Panc1 (cell line): ENCODE measurements at regions of chr15 and their contacts with region 1.

Region 1: GRCh38 chr15:27059610-27060202 is 88.7 kb downstream of the GABRG3 start:
- DNase-seq: no peak
- ATAC-seq: peak; percentile 48; the same call in 1 of the 2 replicates
- H3K4me3 ChIP-seq: no peak overlapping the region
- H3K27ac ChIP-seq: no peak overlapping the region
- H3K4me1 ChIP-seq: no peaks in the 10 kb centered on the region
- H3K27me3 ChIP-seq: no peaks in the 10 kb centered on the region
- CTCF ChIP-seq: peak; percentile 72

Region 2: DNA sequence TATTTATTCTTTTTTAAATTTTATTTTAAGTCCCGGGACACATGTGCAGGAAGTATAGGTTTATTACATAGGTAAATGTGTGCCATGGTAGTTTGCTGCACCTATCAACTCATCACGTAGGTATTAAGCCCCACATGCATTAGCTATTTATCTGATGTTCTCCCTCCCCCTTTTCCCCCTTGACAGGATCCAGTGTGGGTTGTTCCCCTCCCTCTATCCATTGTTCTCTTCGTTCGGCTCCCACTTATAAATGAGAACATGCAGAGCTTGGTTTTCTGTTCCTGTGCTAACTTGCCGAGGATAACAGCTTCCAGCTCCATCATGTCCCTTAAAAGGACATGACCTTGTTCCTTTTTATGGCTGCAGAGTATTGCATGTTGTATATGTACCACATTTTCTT is 819.1 kb after region 1 on chr15:
- CTCF ChIA-PET with region 1: no interaction called
- POLR2A ChIA-PET with region 1: interaction called, 13 read pairs
- in situ Hi-C with region 1: no loop called
- intact Hi-C with region 1: no loop called
- DNase-seq: no peak
- ATAC-seq: no peak
- H3K4me3 ChIP-seq: no peak overlapping the region
- H3K27ac ChIP-seq: no peak overlapping the region
- H3K4me1 ChIP-seq: no peaks in the 10 kb centered on the region
- H3K27me3 ChIP-seq: no peaks in the 10 kb centered on the region
- CTCF ChIP-seq: no peak